ENCODE measurements at regions of chr20 and their contacts with region 1.

Region 1: DNA sequence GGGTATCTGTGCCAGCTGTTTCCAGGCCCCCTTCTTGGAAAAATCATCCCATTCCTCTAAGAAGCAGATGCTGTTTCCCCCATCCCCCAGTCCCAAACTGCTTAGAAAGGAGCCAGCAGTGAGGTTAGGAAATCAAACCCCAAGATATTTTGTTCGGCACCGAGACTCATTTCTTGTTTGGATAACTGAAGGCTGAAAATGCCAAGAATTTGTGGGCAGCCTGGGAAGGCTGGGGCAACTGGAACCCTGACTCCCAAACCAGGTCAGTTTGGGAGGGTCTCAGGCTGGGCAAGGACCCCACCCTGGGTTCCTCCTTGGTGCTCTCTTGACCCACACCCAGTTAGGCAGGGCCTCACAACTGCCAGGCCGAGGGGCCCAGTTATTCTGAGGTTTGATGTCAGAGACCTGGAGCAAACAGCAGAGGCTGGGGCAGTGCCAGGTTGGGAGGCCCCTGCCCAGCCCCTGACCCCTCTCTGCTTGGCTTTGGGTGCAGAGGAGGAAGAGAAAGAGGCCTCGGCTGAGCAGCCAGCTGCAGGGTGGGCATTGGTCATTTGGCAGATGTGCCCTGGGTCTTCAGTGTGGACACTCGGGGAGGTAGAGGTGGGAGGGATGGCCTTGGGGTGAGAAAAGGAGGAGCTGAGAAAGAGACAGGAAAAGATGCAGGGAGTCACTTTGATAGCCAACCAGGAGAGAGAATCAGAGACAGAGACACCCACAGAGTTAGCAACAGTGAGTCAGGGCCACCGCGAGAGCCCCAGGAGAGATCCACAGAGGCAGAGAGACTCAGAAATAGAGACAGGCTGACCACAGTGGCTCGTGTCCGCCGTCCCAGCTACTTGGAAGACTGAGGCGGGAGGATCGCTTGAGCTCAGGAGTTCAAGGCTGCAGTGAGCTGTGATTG is 5.0 kb downstream of the ANGPT4 start:
- DNase-seq: no peak
- H3K4me3 ChIP-seq: no peak overlapping the region
- H3K27ac ChIP-seq: peak overlapping the region in 1 of 2 donors; percentile 68
- H3K4me1 ChIP-seq: no peaks in the 10 kb centered on the region
- H3K27me3 ChIP-seq: peaks cover 0 to 12% of the 10 kb centered on the region in 2 donors
- CTCF ChIP-seq: no peak
- POLR2A ChIP-seq: no peak

Region 2: DNA sequence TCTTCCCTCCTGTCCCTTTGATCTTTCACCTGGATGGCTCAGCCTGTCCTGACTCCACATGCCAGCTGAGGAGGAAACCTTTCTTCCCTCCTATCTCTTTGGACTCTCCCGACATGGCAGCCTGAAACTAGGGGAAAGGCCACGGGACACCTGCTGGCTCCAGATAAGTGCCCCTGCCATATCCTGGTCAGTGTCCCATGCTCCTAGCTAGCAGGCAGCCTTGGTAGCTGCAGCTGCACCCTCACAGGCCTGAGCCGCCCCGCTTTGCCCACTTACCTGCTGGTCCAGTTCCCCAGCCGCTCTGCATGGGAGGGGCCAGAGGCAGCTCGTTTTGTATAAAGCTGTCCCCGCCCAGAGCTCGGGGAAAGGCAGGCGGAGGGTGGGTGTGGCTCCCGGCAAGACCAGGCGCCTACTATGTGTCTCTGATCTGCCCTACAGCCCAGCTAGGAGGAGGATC is 135.4 kb before region 1 on chr20:
- intact Hi-C with region 1: no loop called
- DNase-seq: no peak
- H3K4me3 ChIP-seq: no peak overlapping the region
- H3K27ac ChIP-seq: peak overlapping the region in 1 of 2 donors; percentile 12
- H3K4me1 ChIP-seq: no peaks in the 10 kb centered on the region
- H3K27me3 ChIP-seq: peaks cover 0 to 3% of the 10 kb centered on the region in 2 donors
- CTCF ChIP-seq: no peak
- POLR2A ChIP-seq: no peak

Region 3: GRCh38 chr20:891058-891705 is 19.9 kb before region 1 on chr20:
- intact Hi-C with region 1: loop called (anchors 1 kb)
- DNase-seq: peak in 1 of 2 donors; percentile 30
- H3K4me3 ChIP-seq: peak overlapping the region in 1 of 3 donors; percentile 3
- H3K27ac ChIP-seq: no peak overlapping the region
- H3K4me1 ChIP-seq: no peaks in the 10 kb centered on the region
- H3K27me3 ChIP-seq: no peaks in the 10 kb centered on the region
- CTCF ChIP-seq: no peak
- POLR2A ChIP-seq: no peak